ENCODE measurements at regions of chr1 and their contacts with region 1.

Region 1: GRCh38 chr1:117106478-117106877 is 15.1 kb downstream of the TRIM45 start:
- DNase-seq: no peak
- H3K4me3 ChIP-seq: no peak overlapping the region
- H3K27ac ChIP-seq: no peak overlapping the region
- H3K27me3 ChIP-seq: no peaks in the 10 kb centered on the region
- CTCF ChIP-seq: no peak

Region 2: GRCh38 chr1:117009132-117009531 is 97.3 kb before region 1 on chr1:
- CTCF ChIA-PET with region 1: no interaction called
- POLR2A ChIA-PET with region 1: no interaction called
- DNase-seq: no peak
- H3K4me3 ChIP-seq: no peak overlapping the region
- H3K27ac ChIP-seq: no peak overlapping the region
- H3K27me3 ChIP-seq: no peaks in the 10 kb centered on the region
- CTCF ChIP-seq: no peak

Region 3: GRCh38 chr1:117121776-117122697 is 15.6 kb after region 1 on chr1:
- CTCF ChIA-PET with region 1: interaction called, 10 read pairs
- POLR2A ChIA-PET with region 1: no interaction called
- DNase-seq: peak; percentile 88
- H3K4me3 ChIP-seq: peak overlapping the region; percentile 87
- H3K27ac ChIP-seq: peak overlapping the region; percentile 91
- H3K27me3 ChIP-seq: peaks cover 10% of the 10 kb centered on the region
- CTCF ChIP-seq: peak; percentile 84

Measured in AG04450 (cell line).